ENCODE measurements at regions of chr19 and their contacts with region 1.

Region 1: GRCh38 chr19:45692187-45693105 is at the start of gene QPCTL:
- DNase-seq: peak; percentile 99
- ATAC-seq: peak; percentile 92
- H3K4me3 Mint-ChIP-seq: peak within 1 kb of the TSS; percentile 98
- H3K27ac Mint-ChIP-seq: peak within 1 kb of the TSS; percentile 97
- H3K4me1 Mint-ChIP-seq: peaks cover 23% of the 10 kb centered on the region
- H3K27me3 Mint-ChIP-seq: no peaks in the 10 kb centered on the region
- total RNA-seq, gene QPCTL: 9.6 to 12.7 TPM

Region 2: GRCh38 chr19:45523642-45524256 is 168.7 kb before region 1 on chr19:
- CTCF ChIA-PET with region 1: no interaction called
- DNase-seq: peak; percentile 81
- ATAC-seq: peak; percentile 95
- H3K4me3 Mint-ChIP-seq: no peak overlapping the region
- H3K27ac Mint-ChIP-seq: peak overlapping the region; percentile 66
- H3K4me1 Mint-ChIP-seq: peaks cover 33% of the 10 kb centered on the region
- H3K27me3 Mint-ChIP-seq: no peaks in the 10 kb centered on the region

Region 3: GRCh38 chr19:45681391-45682015 is 10.9 kb before region 1 on chr19:
- CTCF ChIA-PET with region 1: interaction called, 78 read pairs
- DNase-seq: peak; percentile 91
- ATAC-seq: peak; percentile 91
- H3K4me3 Mint-ChIP-seq: peak overlapping the region; percentile 76
- H3K27ac Mint-ChIP-seq: peak overlapping the region; percentile 86
- H3K4me1 Mint-ChIP-seq: peaks cover 23% of the 10 kb centered on the region
- H3K27me3 Mint-ChIP-seq: peaks cover 4% of the 10 kb centered on the region

Region 4: DNA sequence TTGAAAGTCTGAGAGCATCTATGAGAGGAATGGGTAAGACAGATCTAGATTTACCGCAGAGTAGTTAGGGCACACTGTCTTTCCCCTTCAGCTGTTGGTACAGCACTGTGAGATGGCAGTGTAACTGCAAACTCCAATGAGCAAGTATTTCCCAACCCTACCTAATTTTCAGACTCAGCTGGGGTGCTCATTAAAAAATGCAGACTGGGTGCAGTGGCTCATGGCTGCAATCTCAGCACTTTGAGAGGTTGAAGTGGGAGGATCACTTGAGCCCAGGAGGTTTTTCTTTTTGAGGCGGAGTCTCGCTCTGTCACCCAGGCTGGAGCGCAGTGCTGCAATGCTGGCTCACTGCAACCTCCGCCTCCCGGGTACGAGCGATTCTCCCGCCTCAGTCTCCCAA is 12.7 kb after region 1 on chr19:
- CTCF ChIA-PET with region 1: interaction called, 33 read pairs
- DNase-seq: no peak
- ATAC-seq: no peak
- H3K4me3 Mint-ChIP-seq: no peak overlapping the region
- H3K27ac Mint-ChIP-seq: no peak overlapping the region
- H3K4me1 Mint-ChIP-seq: peaks cover 4% of the 10 kb centered on the region
- H3K27me3 Mint-ChIP-seq: no peaks in the 10 kb centered on the region

Region 5: GRCh38 chr19:45717166-45717982 is 24.9 kb after region 1 on chr19:
- CTCF ChIA-PET with region 1: interaction called, 55 read pairs
- DNase-seq: peak; percentile 99
- ATAC-seq: peak; percentile 98
- H3K4me3 Mint-ChIP-seq: peak overlapping the region; percentile 91
- H3K27ac Mint-ChIP-seq: peak overlapping the region; percentile 85
- H3K4me1 Mint-ChIP-seq: peaks cover 37% of the 10 kb centered on the region
- H3K27me3 Mint-ChIP-seq: no peaks in the 10 kb centered on the region

Region 6: GRCh38 chr19:45730389-45731288 is 38.2 kb after region 1 on chr19 and contains the start of gene FBXO46:
- CTCF ChIA-PET with region 1: interaction called, 11 read pairs
- DNase-seq: peak; percentile 98
- ATAC-seq: peak; percentile 100
- H3K4me3 Mint-ChIP-seq: peak within 1 kb of the TSS; percentile 96
- H3K27ac Mint-ChIP-seq: peak within 1 kb of the TSS; percentile 91
- H3K4me1 Mint-ChIP-seq: peaks cover 28% of the 10 kb centered on the region
- H3K27me3 Mint-ChIP-seq: no peaks in the 10 kb centered on the region
- total RNA-seq, gene FBXO46: 33.0 to 37.1 TPM

Region 7: DNA sequence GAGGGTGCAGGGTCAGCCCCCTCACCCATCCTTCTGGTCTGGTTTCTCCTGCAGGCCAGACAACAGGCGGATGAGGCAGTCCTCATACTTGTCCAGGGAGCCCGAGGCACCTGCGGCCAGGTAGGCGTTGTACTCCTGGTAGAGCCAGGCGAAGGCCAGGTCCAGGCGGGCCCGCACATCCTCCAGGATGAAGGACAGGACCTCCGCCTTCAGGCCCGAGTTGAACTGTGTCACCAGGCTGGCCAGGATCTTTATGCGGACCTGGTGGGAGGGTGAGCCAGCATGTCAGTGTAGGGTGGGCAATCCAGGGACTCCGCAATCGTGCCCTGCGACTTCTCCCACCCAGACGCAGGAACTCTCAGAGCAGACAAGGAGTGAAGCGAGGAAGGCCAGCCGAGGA is 136.5 kb after region 1 on chr19:
- CTCF ChIA-PET with region 1: no interaction called
- DNase-seq: no peak
- ATAC-seq: no peak
- H3K4me3 Mint-ChIP-seq: no peak overlapping the region
- H3K27ac Mint-ChIP-seq: no peak overlapping the region
- H3K4me1 Mint-ChIP-seq: peaks cover 3% of the 10 kb centered on the region
- H3K27me3 Mint-ChIP-seq: no peaks in the 10 kb centered on the region

Region 8: DNA sequence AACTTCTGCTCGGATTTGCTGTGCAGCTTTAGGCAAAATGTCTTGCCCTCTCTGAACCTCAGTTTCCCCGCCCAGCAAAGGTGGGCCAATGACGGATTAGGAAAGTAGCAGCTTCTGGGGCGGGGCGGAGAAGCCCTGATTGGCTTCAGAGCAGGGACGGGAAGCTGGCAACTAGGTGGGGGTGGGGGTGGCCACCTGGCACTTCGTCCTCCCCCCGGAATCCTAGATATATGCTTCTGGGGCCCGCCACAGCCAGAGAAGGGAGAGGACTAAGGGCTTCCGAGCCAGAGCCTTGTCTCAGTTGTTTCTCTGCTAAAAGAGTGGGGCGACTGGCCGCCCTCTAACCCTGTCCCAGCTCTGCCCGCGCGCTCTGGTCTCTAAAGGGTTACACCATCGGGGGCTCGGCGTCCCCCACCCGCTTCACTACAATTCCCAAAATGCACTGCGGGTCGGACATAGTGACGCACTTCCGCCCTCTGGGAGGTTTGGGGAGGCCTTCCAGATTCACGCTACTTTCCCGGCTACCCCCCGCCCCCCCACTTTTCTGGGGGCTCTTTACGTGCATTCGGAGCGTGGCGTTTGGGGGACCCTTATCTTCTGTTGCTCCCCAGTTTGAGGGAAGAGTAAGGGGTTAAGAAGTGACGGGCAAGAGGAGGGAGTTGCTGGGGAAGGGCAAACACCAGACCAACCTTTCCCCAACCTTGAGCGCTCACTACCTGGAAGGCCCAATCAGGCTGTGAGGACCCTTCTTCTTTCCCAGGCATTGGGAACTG is 194.2 kb after region 1 on chr19:
- CTCF ChIA-PET with region 1: no interaction called
- DNase-seq: peak; percentile 97
- ATAC-seq: peak; percentile 85
- H3K4me3 Mint-ChIP-seq: peak overlapping the region; percentile 88
- H3K27ac Mint-ChIP-seq: peak overlapping the region; percentile 96
- H3K4me1 Mint-ChIP-seq: peaks cover 20% of the 10 kb centered on the region
- H3K27me3 Mint-ChIP-seq: no peaks in the 10 kb centered on the region

Measured in activated CD8-positive, alpha-beta memory T cell treated with anti-CD3 and anti-CD28 coated beads, Interleukin-2, amount 10 ng/mL, durations not matched to agents 7 days and 5 days (primary cell).